ENCODE measurements at regions of chr1 and their contacts with region 1.

Region 1: GRCh38 chr1:171644805-171645483 is 7.5 kb downstream of the MYOC start:
- DNase-seq: peak; percentile 74
- H3K4me3 Mint-ChIP-seq: no peak overlapping the region
- H3K27ac Mint-ChIP-seq: no peak overlapping the region
- H3K4me1 Mint-ChIP-seq: peaks cover 5% of the 10 kb centered on the region
- H3K27me3 Mint-ChIP-seq: peaks cover 2% of the 10 kb centered on the region

Region 2: GRCh38 chr1:171654942-171655745 is 10.2 kb after region 1 on chr1:
- CTCF ChIA-PET with region 1: interaction called, 26 read pairs
- POLR2A ChIA-PET with region 1: no interaction called
- DNase-seq: peak; percentile 83
- H3K4me3 Mint-ChIP-seq: peak overlapping the region; percentile 37
- H3K27ac Mint-ChIP-seq: no peak overlapping the region
- H3K4me1 Mint-ChIP-seq: peaks cover 10% of the 10 kb centered on the region
- H3K27me3 Mint-ChIP-seq: peaks cover 22% of the 10 kb centered on the region

Region 3: GRCh38 chr1:171715813-171716251 is 70.9 kb after region 1 on chr1:
- CTCF ChIA-PET with region 1: interaction called, 27 read pairs
- POLR2A ChIA-PET with region 1: no interaction called
- DNase-seq: no peak
- H3K4me3 Mint-ChIP-seq: no peak overlapping the region
- H3K27ac Mint-ChIP-seq: no peak overlapping the region
- H3K4me1 Mint-ChIP-seq: peaks cover 3% of the 10 kb centered on the region
- H3K27me3 Mint-ChIP-seq: no peaks in the 10 kb centered on the region

Region 4: GRCh38 chr1:171969813-171970212 is 324.9 kb after region 1 on chr1:
- CTCF ChIA-PET with region 1: no interaction called
- POLR2A ChIA-PET with region 1: no interaction called
- DNase-seq: no peak
- H3K4me3 Mint-ChIP-seq: no peak overlapping the region
- H3K27ac Mint-ChIP-seq: no peak overlapping the region
- H3K4me1 Mint-ChIP-seq: no peaks in the 10 kb centered on the region
- H3K27me3 Mint-ChIP-seq: peaks cover 8% of the 10 kb centered on the region

Region 5: GRCh38 chr1:171984850-171985485 is 340.0 kb after region 1 on chr1:
- CTCF ChIA-PET with region 1: interaction called, 48 read pairs
- POLR2A ChIA-PET with region 1: no interaction called
- DNase-seq: no peak
- H3K4me3 Mint-ChIP-seq: no peak overlapping the region
- H3K27ac Mint-ChIP-seq: no peak overlapping the region
- H3K4me1 Mint-ChIP-seq: no peaks in the 10 kb centered on the region
- H3K27me3 Mint-ChIP-seq: peaks cover 4% of the 10 kb centered on the region